ENCODE measurements at regions of chr20 and their contacts with region 1.

Region 1: GRCh38 chr20:21235484-21236445 is 67.4 kb upstream of the XRN2 start:
- DNase-seq: peak; percentile 83
- ATAC-seq: peak; percentile 85
- H3K4me3 Mint-ChIP-seq: no peak overlapping the region
- H3K27ac Mint-ChIP-seq: no peak overlapping the region
- H3K4me1 Mint-ChIP-seq: peaks cover 3% of the 10 kb centered on the region
- H3K27me3 Mint-ChIP-seq: no peaks in the 10 kb centered on the region

Region 2: DNA sequence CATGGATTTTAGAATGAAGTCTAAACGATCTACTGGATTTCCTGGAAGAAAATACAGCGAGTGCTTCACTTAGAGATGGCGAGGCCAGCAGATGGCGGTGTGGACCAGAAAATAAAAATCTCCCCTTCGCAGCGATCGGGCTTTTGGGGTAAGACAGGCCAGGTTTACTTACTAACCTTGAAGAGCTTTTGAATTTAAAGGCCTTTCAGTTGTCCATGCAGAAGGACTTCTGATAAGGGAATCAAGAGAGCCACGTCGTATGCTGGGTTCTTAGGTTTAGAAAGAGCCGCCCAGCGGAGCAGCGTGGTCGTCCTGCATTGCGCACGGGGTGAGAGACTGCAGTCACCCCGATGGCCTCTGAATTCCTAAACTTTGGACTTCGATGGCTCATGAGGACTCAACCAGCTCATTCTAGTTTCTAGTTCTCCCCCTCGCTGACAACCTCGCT is 398.2 kb before region 1 on chr20:
- CTCF ChIA-PET with region 1: interaction called, 5 read pairs
- POLR2A ChIA-PET with region 1: no interaction called
- intact Hi-C with region 1: loop called in 1 of 2 experiments (anchors 1 kb)
- DNase-seq: peak; percentile 74
- ATAC-seq: no peak
- H3K4me3 Mint-ChIP-seq: no peak overlapping the region
- H3K27ac Mint-ChIP-seq: no peak overlapping the region
- H3K4me1 Mint-ChIP-seq: peaks cover 3% of the 10 kb centered on the region
- H3K27me3 Mint-ChIP-seq: peaks cover 8% of the 10 kb centered on the region

Region 3: DNA sequence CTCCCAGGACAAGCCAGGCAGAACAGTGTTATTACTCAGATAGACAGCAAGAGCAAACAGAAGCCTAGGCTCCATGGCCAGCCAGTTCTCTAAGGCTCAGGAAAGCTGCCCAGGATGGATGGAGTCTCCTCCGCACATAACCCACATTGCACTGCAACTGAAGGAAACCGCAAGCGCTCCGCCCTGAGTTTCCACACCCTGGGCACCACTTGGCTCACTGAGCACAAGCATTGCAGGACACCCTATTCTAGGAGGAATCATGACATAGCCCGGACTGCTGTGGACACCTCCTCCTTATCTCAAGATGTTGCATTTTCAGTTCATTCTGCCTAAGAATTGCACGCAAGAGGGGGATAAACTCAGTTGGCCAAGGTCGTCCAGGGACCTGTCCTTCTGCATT is 172.5 kb before region 1 on chr20:
- CTCF ChIA-PET with region 1: no interaction called
- POLR2A ChIA-PET with region 1: no interaction called
- intact Hi-C with region 1: no loop called
- DNase-seq: no peak
- ATAC-seq: no peak
- H3K4me3 Mint-ChIP-seq: no peak overlapping the region
- H3K27ac Mint-ChIP-seq: no peak overlapping the region
- H3K4me1 Mint-ChIP-seq: no peaks in the 10 kb centered on the region
- H3K27me3 Mint-ChIP-seq: peaks cover 25% of the 10 kb centered on the region

Region 4: DNA sequence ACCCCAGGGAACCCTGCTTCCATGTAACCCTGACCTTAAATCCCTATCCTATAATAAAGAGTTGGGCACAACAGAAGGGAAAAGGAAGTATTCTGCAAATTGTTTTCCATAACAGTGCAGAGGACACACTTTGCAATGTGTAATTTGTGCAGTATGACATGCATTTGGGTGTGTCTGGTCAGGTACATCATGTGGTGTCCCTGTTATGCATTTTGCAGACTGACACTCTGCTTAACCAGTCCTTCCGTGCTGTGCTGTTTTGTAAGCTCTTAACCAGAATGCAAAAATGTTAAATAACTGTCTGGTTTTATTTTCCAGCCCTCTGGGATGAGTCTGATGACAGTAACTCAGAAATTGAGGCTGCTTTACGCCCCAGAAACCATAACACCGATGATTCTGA is 10.4 kb after region 1 on chr20:
- CTCF ChIA-PET with region 1: interaction called, 15 read pairs
- POLR2A ChIA-PET with region 1: no interaction called
- intact Hi-C with region 1: no loop called
- DNase-seq: no peak
- ATAC-seq: no peak
- H3K4me3 Mint-ChIP-seq: no peak overlapping the region
- H3K27ac Mint-ChIP-seq: no peak overlapping the region
- H3K4me1 Mint-ChIP-seq: peaks cover 5% of the 10 kb centered on the region
- H3K27me3 Mint-ChIP-seq: no peaks in the 10 kb centered on the region

Region 5: DNA sequence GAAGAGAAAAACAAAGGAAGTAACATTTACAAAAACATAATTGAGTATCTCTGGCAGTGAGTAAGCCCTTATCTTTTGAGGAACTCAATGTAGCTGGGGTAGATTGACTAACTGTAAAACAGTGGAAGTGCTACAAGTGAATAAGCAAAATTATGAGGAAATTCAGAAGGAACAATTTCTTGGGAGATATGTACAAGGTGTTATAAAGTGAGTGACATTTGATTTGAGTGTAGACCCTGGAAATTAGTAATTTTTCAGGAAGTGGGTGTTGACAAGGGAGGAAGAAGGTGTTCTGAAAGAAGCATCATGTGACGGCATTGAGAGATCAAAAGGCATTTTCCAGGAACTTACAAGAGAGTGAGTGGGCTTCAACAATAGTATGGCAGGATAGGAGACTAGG is 89.5 kb after region 1 on chr20:
- CTCF ChIA-PET with region 1: interaction called, 10 read pairs
- POLR2A ChIA-PET with region 1: no interaction called
- intact Hi-C with region 1: no loop called
- DNase-seq: no peak
- ATAC-seq: peak; percentile 66
- H3K4me3 Mint-ChIP-seq: peak overlapping the region; percentile 21
- H3K27ac Mint-ChIP-seq: peak overlapping the region; percentile 79
- H3K4me1 Mint-ChIP-seq: peaks cover 46% of the 10 kb centered on the region
- H3K27me3 Mint-ChIP-seq: no peaks in the 10 kb centered on the region

Region 6: DNA sequence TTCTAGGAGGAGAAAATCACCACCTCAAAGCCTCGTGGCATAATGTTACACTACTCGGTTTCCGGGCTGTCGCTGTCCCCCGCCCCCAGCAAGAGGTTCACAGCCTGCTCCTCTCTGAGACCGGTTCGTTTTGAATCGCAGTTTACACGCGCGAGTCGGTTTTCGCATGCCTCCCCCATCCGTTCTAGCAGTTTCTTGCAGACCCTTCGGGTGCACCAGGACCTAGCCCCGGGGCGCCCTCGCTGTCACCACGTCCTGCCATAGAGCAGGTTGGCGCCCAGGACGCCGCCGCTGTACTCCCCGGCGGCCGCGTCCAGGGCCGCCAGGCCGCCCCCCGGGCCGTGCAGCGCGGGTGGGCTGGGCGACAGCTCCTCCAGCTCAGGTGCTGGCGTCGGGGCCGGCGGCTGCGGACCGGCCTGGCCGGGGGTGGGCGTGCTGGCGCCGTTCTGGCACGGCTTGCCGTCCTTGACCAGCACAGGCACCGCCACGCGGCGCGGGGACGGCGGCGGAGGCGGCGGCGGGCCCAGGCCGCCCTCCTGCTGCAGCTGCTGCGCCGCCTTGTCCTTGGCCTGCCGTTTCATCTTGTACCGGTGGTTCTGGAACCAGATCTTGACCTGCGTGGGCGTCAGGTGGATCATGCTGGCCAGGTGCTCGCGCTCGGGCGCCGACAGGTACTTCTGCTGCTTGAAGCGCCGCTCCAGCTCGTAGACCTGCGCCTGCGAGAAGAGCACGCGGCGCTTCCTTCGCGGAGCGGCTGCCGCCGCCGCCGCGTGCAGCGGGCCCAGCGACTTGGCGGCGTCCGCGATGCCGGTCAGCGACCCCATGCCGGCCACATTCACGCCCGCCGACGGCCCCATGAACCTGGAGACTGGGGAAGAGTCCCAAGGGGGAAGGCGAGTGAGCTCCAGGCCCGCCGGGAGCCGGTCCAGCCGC is 160.2 kb after region 1 on chr20:
- CTCF ChIA-PET with region 1: interaction called, 15 read pairs
- POLR2A ChIA-PET with region 1: no interaction called
- intact Hi-C with region 1: loop called (anchors 2 kb)
- DNase-seq: peak; percentile 67
- ATAC-seq: peak; percentile 76
- H3K4me3 Mint-ChIP-seq: peak overlapping the region; percentile 40
- H3K27ac Mint-ChIP-seq: no peak overlapping the region
- H3K4me1 Mint-ChIP-seq: peaks cover 24% of the 10 kb centered on the region
- H3K27me3 Mint-ChIP-seq: peaks cover 62% of the 10 kb centered on the region

Region 7: DNA sequence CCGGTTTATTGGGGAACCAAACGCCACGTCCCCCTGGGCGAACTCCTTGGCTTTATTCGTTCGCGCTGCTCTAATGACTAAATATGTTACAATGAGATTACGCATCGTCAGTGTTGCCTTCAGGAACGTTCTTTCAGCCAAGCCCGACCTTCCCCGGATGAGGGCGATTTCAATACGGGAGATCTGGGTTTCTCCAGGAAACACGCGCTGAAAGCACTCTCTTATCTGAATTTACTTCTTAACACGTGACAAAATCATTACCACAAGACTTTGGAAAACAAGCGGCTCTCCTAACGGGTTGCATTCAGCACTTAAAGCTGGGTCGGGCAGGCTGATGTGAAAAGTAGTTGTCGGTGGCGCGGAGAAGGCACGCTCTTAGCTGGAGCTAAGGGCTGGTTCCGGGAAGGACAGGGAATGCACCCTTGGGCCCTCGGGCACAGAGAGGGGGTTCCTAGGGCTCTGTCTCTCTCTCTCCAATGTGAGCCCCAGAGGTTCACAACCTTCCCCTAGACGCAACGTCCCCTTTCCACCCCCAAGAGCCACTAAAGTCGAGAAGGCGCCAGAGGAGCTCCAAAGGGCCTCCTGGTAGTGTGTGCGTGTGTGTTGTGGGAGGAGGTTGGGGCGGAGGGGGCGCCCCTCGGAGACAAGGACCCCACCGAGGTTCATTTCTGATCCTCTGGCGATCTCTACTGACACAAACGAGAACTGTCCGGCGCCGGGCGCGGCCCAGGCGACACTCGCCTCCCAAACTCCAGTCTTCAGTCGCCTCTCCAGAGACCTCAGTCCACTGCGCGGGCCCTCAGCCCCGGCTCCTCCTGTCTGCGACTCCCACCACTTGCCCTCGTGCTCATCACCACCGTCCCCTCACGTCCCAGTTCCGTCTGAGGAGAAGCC is 285.2 kb after region 1 on chr20:
- CTCF ChIA-PET with region 1: interaction called, 10 read pairs
- POLR2A ChIA-PET with region 1: no interaction called
- intact Hi-C with region 1: no loop called
- DNase-seq: peak; percentile 23
- ATAC-seq: no peak
- H3K4me3 Mint-ChIP-seq: no peak overlapping the region
- H3K27ac Mint-ChIP-seq: no peak overlapping the region
- H3K4me1 Mint-ChIP-seq: peaks cover 26% of the 10 kb centered on the region
- H3K27me3 Mint-ChIP-seq: peaks cover 86% of the 10 kb centered on the region

Region 8: DNA sequence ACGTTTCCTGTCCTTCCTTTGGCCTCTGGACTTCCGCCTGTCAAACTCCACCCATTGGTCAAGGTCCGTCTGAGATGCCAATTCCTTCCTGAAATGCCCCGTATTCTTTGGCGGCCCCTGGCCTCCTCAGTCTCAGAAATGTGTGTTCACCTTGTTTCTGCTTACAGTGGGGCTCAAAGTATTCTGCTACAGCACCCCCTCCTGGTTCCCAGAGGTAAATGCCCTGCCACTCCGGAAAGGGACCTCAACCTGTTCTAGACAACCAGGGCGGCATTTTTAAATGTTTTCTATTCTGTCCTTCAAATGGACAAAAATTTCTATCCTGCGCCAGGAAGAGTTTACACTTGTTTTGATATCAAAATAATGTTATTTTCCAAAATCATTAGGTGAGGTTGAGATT is 457.6 kb after region 1 on chr20:
- CTCF ChIA-PET with region 1: interaction called, 3 read pairs
- POLR2A ChIA-PET with region 1: no interaction called
- intact Hi-C with region 1: loop called in 1 of 2 experiments (anchors 10 kb)
- DNase-seq: peak; percentile 21
- ATAC-seq: no peak
- H3K4me3 Mint-ChIP-seq: no peak overlapping the region
- H3K27ac Mint-ChIP-seq: no peak overlapping the region
- H3K4me1 Mint-ChIP-seq: no peaks in the 10 kb centered on the region
- H3K27me3 Mint-ChIP-seq: peaks cover 14% of the 10 kb centered on the region